ENCODE measurements at regions of chr2 and their contacts with region 1.

Region 1: DNA sequence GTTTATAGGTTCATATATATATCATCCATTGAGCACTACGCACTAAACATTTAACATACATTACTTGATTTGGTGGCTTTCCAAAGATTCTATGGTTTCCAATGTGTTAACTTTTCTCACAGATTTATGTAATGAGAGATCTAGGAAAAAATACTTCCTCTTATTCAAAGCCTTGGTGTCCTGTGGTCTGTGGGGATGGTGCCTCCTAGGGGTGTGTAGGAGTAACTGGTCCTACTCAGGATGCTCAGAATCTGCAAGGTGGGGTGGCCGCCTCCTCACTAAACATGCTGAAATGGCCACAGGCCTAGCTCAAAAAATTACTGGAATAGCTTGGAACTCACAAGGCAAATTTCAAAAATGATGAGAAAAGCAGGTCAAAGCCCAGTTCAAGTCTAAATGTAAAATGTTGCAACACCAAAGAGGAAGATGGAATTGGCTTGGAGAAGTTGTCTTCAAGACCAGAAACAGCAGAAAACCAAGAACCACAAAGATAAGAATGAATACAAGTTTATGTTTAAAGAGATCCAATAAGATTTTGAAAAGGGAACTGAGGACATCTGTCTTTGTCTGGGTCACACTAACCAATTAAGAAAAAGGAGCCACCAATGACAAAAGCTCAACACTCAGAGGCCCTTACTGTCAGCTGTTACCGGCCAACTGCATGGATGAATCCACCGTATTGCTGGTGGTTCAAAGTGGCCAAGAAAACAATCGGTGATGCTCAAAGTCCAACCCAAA is 11.5 kb downstream of the GPR55 start:
- H3K4me3 ChIP-seq: no peak overlapping the region
- H3K27ac ChIP-seq: no peak overlapping the region
- H3K4me1 ChIP-seq: no peaks in the 10 kb centered on the region
- CTCF ChIP-seq: no peak

Region 2: DNA sequence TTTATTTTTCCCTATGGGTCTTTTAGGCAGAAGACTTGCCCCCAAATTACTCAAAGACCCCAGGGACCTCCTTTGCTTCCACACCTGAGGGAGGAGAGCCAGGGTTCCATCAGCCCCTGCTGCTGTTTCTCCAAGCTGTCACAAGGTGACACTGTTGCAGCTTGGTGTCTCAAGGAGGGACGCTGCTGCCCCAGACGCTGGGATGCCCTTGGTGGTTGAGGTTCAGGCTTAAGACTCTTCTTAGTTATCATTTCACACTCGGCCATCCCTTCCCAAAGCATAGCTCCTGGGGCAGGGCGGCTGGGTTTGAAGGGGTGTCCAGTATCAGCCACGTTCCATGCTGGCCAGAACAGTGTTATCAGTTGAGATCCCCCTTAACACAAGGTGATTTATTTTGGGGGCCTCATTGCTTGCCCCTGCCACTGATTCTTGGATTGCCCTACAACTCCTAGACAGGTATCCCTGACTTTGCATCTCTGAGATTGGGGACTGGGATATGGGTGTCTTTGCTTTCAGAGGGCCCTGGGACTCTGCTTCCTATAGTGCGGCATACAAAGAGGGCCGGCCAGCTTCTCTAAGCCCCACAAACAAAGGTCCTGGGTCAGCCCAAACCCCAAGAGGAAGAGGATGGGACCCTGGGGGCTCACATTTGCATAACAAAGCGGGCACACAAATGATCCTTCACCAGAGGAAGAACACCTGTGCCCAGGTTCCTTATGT is 11.2 kb before region 1 on chr2:
- CTCF ChIA-PET with region 1: interaction called, 16 read pairs
- POLR2A ChIA-PET with region 1: no interaction called
- H3K4me3 ChIP-seq: no peak overlapping the region
- H3K27ac ChIP-seq: no peak overlapping the region
- H3K4me1 ChIP-seq: no peaks in the 10 kb centered on the region
- CTCF ChIP-seq: peak; percentile 78

Region 3: DNA sequence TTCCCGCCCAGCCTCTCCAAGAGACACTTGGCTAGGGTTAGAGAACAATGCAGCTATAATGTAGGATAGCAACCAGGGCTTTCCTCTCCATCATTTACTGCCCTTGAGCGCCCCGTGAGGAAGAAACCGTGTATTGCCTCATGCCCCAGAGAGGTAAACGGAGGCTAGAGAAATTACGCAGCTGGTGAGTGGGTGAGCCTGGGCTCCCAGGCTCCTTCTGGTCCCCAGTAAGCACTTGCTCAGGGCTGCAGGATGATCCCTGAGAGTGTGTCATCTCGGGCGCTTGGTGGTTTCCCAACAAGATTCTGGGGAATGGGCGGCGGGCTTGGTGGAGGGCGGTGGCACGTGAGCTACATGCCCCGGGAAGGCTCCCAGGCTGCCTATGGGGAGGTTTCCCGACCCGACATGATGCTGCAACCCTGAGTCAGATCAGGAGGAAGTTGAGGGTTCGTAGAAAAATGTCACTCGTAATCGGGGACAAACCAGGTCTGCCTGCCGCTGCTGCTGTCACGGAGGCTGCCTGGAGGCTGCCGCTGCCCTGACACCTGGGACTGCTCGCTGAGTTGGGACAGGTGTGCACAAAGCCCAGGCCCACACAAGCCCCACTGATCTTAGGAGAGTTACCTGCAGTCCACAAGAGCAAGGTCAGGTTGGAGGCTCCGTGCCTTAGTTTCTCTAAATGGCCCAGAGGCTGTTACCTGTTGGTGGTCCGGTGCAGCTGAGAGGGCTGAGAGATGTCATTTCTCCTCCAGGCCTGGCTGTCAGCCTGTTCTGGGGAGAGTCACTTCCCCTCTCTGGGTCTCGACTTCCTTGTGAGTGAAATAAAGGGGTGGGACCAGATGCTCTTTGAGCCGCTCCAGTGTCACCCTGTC is 11.1 kb after region 1 on chr2 and contains the start of gene GPR55:
- CTCF ChIA-PET with region 1: interaction called, 15 read pairs
- POLR2A ChIA-PET with region 1: no interaction called
- H3K4me3 ChIP-seq: no peak within 1 kb of the TSS
- H3K27ac ChIP-seq: no peak within 1 kb of the TSS
- H3K4me1 ChIP-seq: no peaks in the 10 kb centered on the region
- CTCF ChIP-seq: no peak

Region 4: GRCh38 chr2:231007286-231008007 is 93.9 kb after region 1 on chr2:
- CTCF ChIA-PET with region 1: no interaction called
- POLR2A ChIA-PET with region 1: no interaction called
- H3K4me3 ChIP-seq: no peak overlapping the region
- H3K27ac ChIP-seq: no peak overlapping the region
- H3K4me1 ChIP-seq: no peaks in the 10 kb centered on the region
- CTCF ChIP-seq: no peak